PC-3 (cell line): ENCODE measurements at regions of chr17 and their contacts with region 1.

Region 1: DNA sequence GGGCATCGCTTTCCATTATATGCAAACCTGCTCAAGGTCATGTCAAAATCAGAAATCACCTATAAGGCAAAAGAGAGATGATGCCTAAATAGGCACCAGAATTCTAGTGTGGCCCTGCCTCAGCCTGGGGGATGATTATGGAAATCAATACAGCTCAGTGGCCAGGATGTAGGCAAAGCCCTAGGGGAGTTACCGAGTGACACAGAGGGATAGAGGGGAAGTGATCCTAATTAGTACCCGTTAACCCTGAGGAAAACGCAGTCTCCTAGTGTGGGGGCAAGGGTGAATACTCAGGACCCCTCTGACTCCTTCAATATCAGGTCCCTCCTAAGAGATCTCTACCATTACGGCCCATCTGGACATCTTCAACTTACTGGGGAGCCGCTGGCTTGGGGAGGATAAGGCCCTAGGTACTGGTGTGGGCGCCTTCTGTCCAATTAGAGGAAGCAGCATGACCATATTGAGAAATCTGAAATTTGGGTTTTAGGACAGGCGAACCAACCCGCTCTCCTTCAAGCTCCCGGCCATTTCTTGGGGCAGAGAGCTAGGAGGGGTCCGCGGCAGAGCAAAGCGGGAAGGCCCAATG is 725 bp downstream of the NT5C3B start:
- DNase-seq: no peak
- ATAC-seq: peak; percentile 49
- H3K4me3 ChIP-seq: peak overlapping the region; percentile 95
- H3K27ac ChIP-seq: no peak overlapping the region
- H3K4me1 ChIP-seq: peaks cover 8% of the 10 kb centered on the region
- H3K27me3 ChIP-seq: no peaks in the 10 kb centered on the region
- CTCF ChIP-seq: no peak

Region 2: DNA sequence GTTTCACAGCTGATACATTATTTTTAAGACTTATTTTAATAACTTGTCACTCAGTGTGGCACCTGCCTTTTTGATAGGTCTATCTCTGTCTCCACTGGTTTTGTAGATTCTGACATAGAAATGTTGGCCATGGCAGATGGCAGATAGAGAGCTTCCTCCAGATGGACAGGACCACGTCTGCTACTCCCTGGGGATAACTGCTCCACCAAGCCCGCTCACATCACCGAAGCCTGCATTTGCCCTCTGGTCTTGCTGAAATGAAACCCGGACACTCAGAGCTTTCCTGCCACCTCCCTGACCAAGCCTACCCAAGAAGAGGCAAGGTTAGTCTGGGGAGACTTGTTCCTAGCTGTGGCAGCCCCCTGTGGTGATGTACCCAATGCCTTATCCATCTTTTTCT is 84.4 kb before region 1 on chr17:
- CTCF ChIA-PET with region 1: no interaction called
- POLR2A ChIA-PET with region 1: no interaction called
- intact Hi-C with region 1: no loop called
- DNase-seq: no peak
- ATAC-seq: no peak
- H3K4me3 ChIP-seq: no peak overlapping the region
- H3K27ac ChIP-seq: no peak overlapping the region
- H3K4me1 ChIP-seq: no peaks in the 10 kb centered on the region
- H3K27me3 ChIP-seq: no peaks in the 10 kb centered on the region
- CTCF ChIP-seq: no peak

Region 3: GRCh38 chr17:41824086-41824485 is 11.2 kb before region 1 on chr17:
- CTCF ChIA-PET with region 1: no interaction called
- POLR2A ChIA-PET with region 1: interaction called, 15 read pairs
- intact Hi-C with region 1: no loop called
- DNase-seq: no peak
- ATAC-seq: no peak
- H3K4me3 ChIP-seq: no peak overlapping the region
- H3K27ac ChIP-seq: no peak overlapping the region
- H3K4me1 ChIP-seq: no peaks in the 10 kb centered on the region
- H3K27me3 ChIP-seq: no peaks in the 10 kb centered on the region
- CTCF ChIP-seq: no peak